ENCODE measurements at regions of chr1 and their contacts with region 1.

Region 1: GRCh38 chr1:206725109-206725963 is 40.6 kb downstream of the MAPKAPK2 start:
- DNase-seq: no peak
- ATAC-seq: no peak
- H3K4me3 ChIP-seq: no peak overlapping the region
- H3K27ac ChIP-seq: peak overlapping the region in 9 of 10 donors; percentile 12 to 95 (median 86)
- H3K4me1 ChIP-seq: peaks cover 35 to 95% (median 84%) of the 10 kb centered on the region in 9 donors
- H3K27me3 ChIP-seq: no peaks in the 10 kb centered on the region
- CTCF ChIP-seq: peak; percentile 30 to 75 (median 54)

Region 2: DNA sequence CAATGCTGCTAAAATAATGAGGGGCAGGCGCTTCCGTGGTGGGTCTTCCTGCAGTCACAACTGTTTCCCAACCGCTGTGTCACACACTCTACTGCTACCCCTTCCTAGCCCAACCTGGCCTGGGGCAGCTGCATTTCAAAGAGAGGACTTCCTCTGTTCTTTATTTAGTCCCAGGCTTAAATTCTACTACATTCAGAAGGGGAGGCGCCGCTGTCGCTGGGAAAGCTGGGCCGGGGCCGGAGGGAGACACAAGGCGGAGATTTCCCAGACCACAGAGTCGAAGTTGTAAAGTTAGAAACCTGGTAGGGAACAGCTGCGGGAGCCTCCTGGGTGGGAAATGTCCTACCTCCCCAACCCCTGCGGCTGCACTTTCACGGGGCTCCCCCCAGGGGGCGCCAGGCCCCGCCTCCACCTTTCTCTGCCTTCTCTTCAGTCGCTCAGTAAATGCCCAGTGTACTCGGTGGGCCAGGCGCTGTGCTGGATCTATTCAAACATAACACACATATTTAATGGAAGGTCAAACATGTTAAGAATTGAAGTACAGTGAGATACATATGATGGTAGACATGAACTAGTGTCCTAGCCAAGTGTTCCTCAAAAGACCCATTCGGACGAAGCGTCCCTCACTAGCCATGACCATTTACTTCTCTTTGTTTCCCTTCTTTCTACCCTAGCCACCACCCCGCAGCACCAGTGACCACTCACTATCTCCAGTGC is 66.9 kb before region 1 on chr1:
- intact Hi-C with region 1: loop called in 4 of 10 experiments (anchors 2 to 10 kb)
- DNase-seq: peak in 1 of 2 donors; percentile 53
- ATAC-seq: peak; percentile 40 to 73 (median 65)
- H3K4me3 ChIP-seq: peak overlapping the region in 8 of 10 donors; percentile 0 to 40 (median 36)
- H3K27ac ChIP-seq: peak overlapping the region; percentile 68 to 96 (median 84)
- H3K4me1 ChIP-seq: peaks cover 20 to 93% (median 77%) of the 10 kb centered on the region in 9 donors
- H3K27me3 ChIP-seq: peaks cover 0 to 1% (median 0%) of the 10 kb centered on the region in 7 donors
- CTCF ChIP-seq: peak; percentile 61 to 93 (median 88)

Region 3: DNA sequence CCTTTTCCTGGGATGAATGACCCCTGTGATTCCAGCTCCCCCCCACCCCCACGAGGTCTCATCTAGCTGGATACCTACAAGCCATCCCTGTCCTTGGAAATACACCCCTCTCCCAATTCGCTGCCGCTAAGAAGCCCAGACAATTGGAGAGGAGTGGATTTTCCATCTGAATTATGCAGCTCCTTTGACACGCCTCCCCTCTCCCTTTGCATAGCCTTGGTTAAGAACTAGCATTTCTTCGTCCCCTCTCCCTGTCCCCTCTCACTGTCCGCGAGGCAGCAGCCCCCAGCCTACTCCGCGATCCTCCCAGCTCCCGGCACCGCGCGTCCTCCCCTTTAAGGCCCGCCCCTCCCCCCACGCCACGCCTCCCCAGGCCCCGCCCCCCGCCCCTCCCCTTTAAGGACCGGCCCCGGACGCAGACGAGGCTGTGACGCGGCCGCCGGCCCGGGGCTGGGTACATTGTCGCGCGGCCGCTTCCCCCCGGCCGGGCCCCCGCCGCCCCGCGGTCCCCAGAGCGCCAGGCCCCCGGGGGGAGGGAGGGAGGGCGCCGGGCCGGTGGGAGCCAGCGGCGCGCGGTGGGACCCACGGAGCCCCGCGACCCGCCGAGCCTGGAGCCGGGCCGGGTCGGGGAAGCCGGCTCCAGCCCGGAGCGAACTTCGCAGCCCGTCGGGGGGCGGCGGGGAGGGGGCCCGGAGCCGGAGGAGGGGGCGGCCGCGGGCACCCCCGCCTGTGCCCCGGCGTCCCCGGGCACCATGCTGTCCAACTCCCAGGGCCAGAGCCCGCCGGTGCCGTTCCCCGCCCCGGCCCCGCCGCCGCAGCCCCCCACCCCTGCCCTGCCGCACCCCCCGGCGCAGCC is 40.6 kb before region 1 on chr1 and contains the start of gene MAPKAPK2:
- intact Hi-C with region 1: loop called in 5 of 10 experiments (anchors 2 to 5 kb)
- DNase-seq: peak; percentile 85
- ATAC-seq: peak; percentile 73 to 88 (median 81)
- H3K4me3 ChIP-seq: peak within 1 kb of the TSS; percentile 50 to 95 (median 86)
- H3K27ac ChIP-seq: peak within 1 kb of the TSS; percentile 91 to 99 (median 98)
- H3K4me1 ChIP-seq: peaks cover 20 to 55% (median 41%) of the 10 kb centered on the region in 9 donors
- H3K27me3 ChIP-seq: no peaks in the 10 kb centered on the region
- CTCF ChIP-seq: no peak
- total RNA-seq, gene MAPKAPK2: 169 to 323 (median 224) TPM

Region 4: GRCh38 chr1:206693029-206693428 is 32.3 kb before region 1 on chr1:
- intact Hi-C with region 1: loop called in 6 of 10 experiments (anchors 2 to 5 kb)
- DNase-seq: peak; percentile 84 to 85
- ATAC-seq: peak; percentile 74 to 92 (median 86)
- H3K4me3 ChIP-seq: peak overlapping the region in 6 of 10 donors; percentile 4 to 21 (median 16)
- H3K27ac ChIP-seq: peak overlapping the region; percentile 80 to 99 (median 96)
- H3K4me1 ChIP-seq: peaks cover 53 to 100% (median 100%) of the 10 kb centered on the region in 9 donors
- H3K27me3 ChIP-seq: no peaks in the 10 kb centered on the region
- CTCF ChIP-seq: no peak

Region 5: DNA sequence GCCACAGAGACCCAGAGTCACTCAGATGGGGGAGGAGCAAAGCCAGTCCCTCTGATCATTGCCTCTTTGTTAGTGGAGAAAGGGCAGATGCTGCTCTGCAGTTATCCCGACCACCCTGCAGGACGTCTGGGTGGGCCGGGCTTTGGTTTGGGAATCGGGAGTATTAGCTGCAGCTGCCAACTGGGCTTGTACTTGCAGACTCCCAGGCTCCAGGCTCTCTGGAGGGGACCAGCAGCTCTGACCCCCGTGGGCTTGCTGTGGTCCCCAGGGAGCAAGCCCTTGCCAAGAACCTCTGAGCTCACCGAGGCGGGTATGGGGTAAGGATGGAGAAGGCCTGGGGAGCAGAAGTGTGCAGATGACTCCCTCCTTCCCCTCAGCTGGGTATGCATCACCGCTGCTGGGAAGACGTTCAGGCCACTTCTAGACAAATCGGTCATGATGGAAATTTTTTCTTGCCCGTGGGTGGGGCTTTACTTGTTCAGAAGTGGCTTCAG is 19.0 kb before region 1 on chr1:
- intact Hi-C with region 1: no loop called
- DNase-seq: peak in 1 of 2 donors; percentile 37
- ATAC-seq: peak; percentile 5 to 64 (median 30)
- H3K4me3 ChIP-seq: peak overlapping the region in 3 of 10 donors; percentile 6 to 12 (median 8)
- H3K27ac ChIP-seq: peak overlapping the region in 9 of 10 donors; percentile 59 to 84 (median 74)
- H3K4me1 ChIP-seq: peaks cover 49 to 100% (median 97%) of the 10 kb centered on the region in 9 donors
- H3K27me3 ChIP-seq: no peaks in the 10 kb centered on the region
- CTCF ChIP-seq: no peak

Region 6: DNA sequence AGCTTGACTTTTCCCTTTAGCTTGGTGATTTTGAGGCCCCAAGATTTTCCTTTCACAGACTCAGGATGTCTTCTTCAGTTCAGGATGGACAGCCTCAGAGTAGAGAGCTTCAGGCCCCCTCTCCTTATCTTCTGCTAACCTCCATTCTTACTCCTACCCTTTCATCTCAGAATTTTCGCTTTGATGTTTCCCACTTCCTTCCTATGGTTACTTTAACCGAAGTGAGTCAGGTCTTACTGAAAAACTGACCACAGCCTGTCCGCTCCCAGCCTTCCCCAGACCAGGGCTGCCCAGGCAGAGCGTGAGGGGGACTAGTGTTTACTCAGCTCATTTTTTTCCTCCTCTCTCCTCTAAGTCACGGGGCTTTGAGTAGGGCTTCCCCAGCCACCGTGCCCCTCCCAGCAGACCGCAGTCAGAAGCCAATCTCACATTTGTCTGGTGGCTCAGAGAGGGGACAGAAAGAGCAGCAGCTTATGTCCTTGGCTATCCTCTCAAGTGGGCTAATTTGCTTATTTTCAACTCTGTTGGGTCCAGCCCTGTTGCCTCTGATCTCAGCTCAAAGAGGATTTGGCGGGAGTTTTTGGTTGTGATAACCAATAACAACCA is 41.0 kb after region 1 on chr1:
- intact Hi-C with region 1: no loop called
- DNase-seq: peak; percentile 11 to 23
- ATAC-seq: peak in 7 of 8 donors; percentile 52 to 79 (median 72)
- H3K4me3 ChIP-seq: no peak overlapping the region
- H3K27ac ChIP-seq: peak overlapping the region in 1 of 10 donors; percentile 28
- H3K4me1 ChIP-seq: peaks cover 0 to 63% (median 0%) of the 10 kb centered on the region in 9 donors
- H3K27me3 ChIP-seq: peaks cover 0 to 11% (median 0%) of the 10 kb centered on the region in 7 donors
- CTCF ChIP-seq: no peak

Region 7: DNA sequence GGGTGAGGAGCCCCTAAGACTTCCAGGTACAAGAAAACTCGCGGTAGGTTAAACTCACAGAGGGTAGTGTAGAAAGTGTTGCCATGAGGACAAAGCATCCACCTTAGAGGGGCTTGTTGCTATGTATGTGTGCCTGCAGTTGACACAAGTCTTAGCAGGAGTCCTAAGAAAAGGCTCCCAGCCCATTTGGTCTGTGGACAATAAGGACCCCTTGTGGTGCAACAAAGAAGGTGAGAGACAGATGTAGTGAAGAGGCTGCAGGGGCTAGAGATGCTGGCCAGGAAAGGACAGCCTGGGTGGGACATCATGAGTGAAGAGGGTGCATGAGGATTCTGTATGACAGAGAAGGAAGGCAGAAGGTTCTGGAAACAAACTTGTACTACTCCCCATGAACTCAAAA is 83.3 kb after region 1 on chr1:
- intact Hi-C with region 1: loop called in 3 of 10 experiments (anchors 5 to 10 kb)
- DNase-seq: peak in 1 of 2 donors; percentile 34
- ATAC-seq: peak in 7 of 8 donors; percentile 68 to 85 (median 75)
- H3K4me3 ChIP-seq: no peak overlapping the region
- H3K27ac ChIP-seq: no peak overlapping the region
- H3K4me1 ChIP-seq: peaks cover 0 to 17% (median 0%) of the 10 kb centered on the region in 9 donors
- H3K27me3 ChIP-seq: peaks cover 0 to 4% (median 0%) of the 10 kb centered on the region in 7 donors
- CTCF ChIP-seq: peak in 8 of 9 donors; percentile 21 to 56 (median 48)